ENCODE measurements at regions of chr18 and their contacts with region 1.

Region 1: DNA sequence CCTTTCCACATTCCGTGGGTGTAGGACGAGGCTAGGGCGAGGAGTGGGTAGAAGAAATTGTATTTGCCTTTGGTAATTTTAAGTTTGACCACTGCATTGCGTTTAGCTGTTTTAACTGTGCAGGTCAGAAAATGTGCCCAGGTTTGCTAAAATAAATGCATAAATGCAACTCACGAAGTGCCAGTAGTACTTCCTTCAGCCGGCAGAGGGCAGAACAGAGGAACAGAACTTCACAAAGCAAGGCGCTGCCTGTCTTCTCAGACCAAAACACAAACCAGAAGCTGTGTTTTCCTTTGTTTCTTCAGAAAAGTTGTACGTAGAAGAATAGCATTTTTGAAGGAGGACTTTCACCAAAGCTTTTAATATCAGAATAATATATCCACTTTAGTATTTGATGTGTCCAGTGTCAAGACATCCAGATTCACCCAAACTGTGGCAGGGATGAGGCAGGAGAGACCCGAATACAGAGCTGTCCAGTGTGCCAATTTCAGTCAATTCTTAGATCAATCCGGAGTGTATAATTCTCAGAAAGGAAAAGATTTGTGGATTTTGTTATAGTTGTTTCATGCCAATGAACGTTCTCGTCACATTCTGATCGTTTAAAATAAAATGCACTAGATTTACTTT is 348.6 kb downstream of the DLGAP1 start:
- DNase-seq: peak in 4 of 5 donors; percentile 73 to 85 (median 78)
- H3K4me3 ChIP-seq: no peak overlapping the region
- H3K27ac ChIP-seq: no peak overlapping the region
- H3K4me1 ChIP-seq: no peaks in the 10 kb centered on the region
- H3K27me3 ChIP-seq: no peaks in the 10 kb centered on the region
- CTCF ChIP-seq: peak; percentile 78

Region 2: DNA sequence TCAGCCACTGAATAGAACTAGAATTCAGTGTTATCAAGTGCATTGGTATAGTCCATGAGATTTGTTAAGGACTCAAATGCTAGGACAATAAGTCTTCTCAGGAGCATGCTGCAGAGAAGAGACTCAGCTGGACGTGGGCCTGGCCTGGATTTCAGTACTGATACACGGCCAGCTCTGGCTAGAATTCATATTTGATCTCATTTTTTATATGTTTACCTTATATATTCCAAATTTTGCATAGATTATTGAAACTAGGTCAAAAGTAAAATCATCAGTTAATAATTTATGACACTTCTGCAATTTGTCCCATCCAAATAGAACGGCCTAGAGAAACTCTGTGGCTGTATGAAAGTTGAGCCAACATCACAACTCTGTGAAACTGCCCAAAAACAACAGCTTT is 86.6 kb after region 1 on chr18:
- intact Hi-C with region 1: no loop called
- DNase-seq: no peak
- H3K4me3 ChIP-seq: no peak overlapping the region
- H3K27ac ChIP-seq: no peak overlapping the region
- H3K4me1 ChIP-seq: no peaks in the 10 kb centered on the region
- H3K27me3 ChIP-seq: no peaks in the 10 kb centered on the region
- CTCF ChIP-seq: no peak

Region 3: DNA sequence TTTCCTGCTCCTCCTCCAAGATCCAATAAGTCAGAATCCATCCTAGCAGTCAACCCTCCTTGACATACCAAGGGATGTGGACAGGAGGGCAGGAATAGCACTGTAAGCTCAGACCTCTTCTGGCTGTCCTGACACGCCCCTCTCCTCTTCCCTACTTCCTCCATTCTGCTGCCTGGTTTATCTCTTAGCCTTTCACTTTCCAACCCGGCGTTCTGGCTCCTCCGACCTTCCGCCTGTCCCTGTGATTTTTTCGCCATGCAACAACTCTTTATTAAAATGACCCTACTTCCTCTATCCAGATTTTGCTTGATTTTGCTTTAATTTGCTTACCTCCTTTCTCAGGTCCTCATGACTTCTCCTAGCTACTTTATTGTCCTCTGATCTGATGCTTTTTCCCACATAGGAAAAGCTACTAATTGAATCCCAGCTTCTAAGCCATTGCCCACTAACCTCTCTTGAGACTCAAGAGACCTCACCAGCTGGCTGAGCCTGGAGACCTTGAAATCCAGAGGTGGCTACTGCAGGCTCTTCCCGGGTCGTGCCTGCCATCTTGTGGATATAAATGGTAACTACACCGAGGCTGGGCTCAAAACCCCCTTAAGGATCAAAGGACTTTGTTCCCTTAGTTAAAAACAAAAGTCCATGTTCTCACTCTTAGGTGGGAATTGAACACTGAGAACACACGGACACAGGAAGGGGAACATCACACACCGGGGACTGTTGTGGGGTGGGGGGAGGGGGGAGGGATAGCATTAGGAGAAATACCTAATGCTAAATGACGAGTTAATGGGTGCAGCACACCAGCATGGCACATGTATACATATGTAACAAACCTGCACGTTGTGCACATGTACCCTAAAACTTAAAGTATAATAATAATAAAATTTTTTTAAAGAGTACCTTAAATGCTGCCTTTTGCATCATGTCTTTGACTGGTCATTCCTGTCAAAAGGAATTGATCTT is 951.1 kb after region 1 on chr18:
- intact Hi-C with region 1: loop called (anchors 5 kb)
- DNase-seq: peak in 4 of 5 donors; percentile 76 to 85 (median 82)
- H3K4me3 ChIP-seq: no peak overlapping the region
- H3K27ac ChIP-seq: no peak overlapping the region
- H3K4me1 ChIP-seq: no peaks in the 10 kb centered on the region
- H3K27me3 ChIP-seq: no peaks in the 10 kb centered on the region
- CTCF ChIP-seq: peak; percentile 63

Measured in kidney (tissue), 22 donors.